PC-9 (cell line): ENCODE measurements at regions of chr16 and their contacts with region 1.

Region 1: DNA sequence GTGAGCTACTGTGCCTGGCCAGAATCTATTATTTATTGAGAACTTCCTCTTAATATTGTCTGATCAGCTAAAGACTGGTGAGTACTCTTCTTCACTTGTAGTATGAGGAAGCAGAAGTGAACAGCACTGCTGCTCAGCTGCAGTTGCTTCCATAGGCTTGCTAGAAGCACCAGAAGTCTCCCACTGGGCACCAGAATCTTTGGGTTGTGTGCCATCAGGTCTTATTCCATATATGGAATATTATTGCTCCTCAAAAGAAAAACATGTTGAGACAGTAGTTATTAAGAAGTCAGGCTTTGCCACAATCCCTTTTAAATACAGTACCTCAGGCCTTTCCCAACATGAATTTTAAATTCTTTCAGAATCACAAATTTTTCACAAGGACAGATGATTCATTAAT is 17.2 kb downstream of the SNTB2 start:
- DNase-seq: no peak
- H3K4me3 ChIP-seq: no peak overlapping the region
- H3K27ac ChIP-seq: no peak overlapping the region
- H3K4me1 ChIP-seq: peaks cover 38% of the 10 kb centered on the region
- H3K27me3 ChIP-seq: no peaks in the 10 kb centered on the region
- CTCF ChIP-seq: no peak

Region 2: GRCh38 chr16:68200088-68200783 is 1003.9 kb before region 1 on chr16:
- CTCF ChIA-PET with region 1: no interaction called
- POLR2A ChIA-PET with region 1: interaction called, 10 read pairs
- intact Hi-C with region 1: no loop called
- DNase-seq: peak in 1 of 2 experiments; percentile 68
- H3K4me3 ChIP-seq: no peak overlapping the region
- H3K27ac ChIP-seq: peak overlapping the region; percentile 47; the same call in 1 of the 2 replicates
- H3K4me1 ChIP-seq: peaks cover 17% of the 10 kb centered on the region
- H3K27me3 ChIP-seq: no peaks in the 10 kb centered on the region
- CTCF ChIP-seq: no peak

Region 3: GRCh38 chr16:69083329-69083941 is 120.7 kb before region 1 on chr16:
- CTCF ChIA-PET with region 1: interaction called, 18 read pairs
- POLR2A ChIA-PET with region 1: no interaction called
- intact Hi-C with region 1: no loop called
- DNase-seq: no peak
- H3K4me3 ChIP-seq: no peak overlapping the region
- H3K27ac ChIP-seq: no peak overlapping the region
- H3K4me1 ChIP-seq: peaks cover 5% of the 10 kb centered on the region; the same call in 1 of the 2 replicates
- H3K27me3 ChIP-seq: no peaks in the 10 kb centered on the region
- CTCF ChIP-seq: peak; percentile 27; the same call in 1 of the 2 replicates

Region 4: DNA sequence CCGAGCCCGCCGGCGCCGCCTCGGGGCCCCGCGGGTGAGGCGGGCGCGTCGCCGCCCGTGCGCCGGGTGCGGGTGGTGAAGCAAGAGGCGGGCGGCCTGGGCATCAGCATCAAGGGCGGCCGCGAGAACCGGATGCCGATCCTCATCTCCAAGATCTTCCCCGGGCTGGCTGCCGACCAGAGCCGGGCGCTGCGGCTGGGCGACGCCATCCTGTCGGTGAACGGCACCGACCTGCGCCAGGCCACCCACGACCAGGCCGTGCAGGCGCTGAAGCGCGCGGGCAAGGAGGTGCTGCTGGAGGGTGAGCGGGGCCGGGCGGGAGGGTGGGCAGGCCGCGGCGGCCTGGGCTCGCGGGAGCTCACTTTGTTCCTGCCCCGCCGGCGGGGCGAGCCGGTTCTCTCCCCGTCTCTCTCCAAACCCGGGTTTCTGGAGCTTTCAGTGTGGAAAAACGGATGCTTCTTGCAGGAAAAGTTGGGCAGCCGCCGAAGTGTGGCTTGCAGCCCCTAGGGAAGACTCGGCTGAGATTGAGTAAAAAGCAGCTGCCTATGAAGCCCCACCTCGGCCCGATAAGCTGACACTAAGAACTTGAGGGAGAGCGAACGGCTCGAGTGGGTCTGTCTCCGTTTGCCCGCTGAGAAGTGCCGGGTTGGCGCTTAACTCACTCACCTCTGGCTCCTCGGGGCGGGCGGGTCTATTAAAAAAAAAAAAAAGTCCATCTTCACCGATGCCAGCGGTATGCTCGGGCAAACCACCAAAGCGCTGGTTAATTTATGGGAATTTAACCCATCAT is 16.5 kb before region 1 on chr16:
- CTCF ChIA-PET with region 1: no interaction called
- POLR2A ChIA-PET with region 1: no interaction called
- intact Hi-C with region 1: loop called (anchors 1 kb)
- DNase-seq: peak; percentile 34 to 37
- H3K4me3 ChIP-seq: peak overlapping the region; percentile 68
- H3K27ac ChIP-seq: no peak overlapping the region
- H3K4me1 ChIP-seq: peaks cover 46% of the 10 kb centered on the region
- H3K27me3 ChIP-seq: no peaks in the 10 kb centered on the region
- CTCF ChIP-seq: no peak

Region 5: GRCh38 chr16:69217433-69217832 is 13.3 kb after region 1 on chr16:
- CTCF ChIA-PET with region 1: no interaction called
- POLR2A ChIA-PET with region 1: interaction called, 11 read pairs
- intact Hi-C with region 1: no loop called
- DNase-seq: peak in 1 of 2 experiments; percentile 85
- H3K4me3 ChIP-seq: no peak overlapping the region
- H3K27ac ChIP-seq: peak overlapping the region; percentile 40
- H3K4me1 ChIP-seq: peaks cover 46% of the 10 kb centered on the region
- H3K27me3 ChIP-seq: no peaks in the 10 kb centered on the region
- CTCF ChIP-seq: no peak

Region 6: GRCh38 chr16:69709456-69710084 is 505.4 kb after region 1 on chr16:
- CTCF ChIA-PET with region 1: no interaction called
- POLR2A ChIA-PET with region 1: interaction called, 13 read pairs
- intact Hi-C with region 1: no loop called
- DNase-seq: peak in 1 of 2 experiments; percentile 51
- H3K4me3 ChIP-seq: no peak overlapping the region
- H3K27ac ChIP-seq: no peak overlapping the region
- H3K4me1 ChIP-seq: peaks cover 18% of the 10 kb centered on the region
- H3K27me3 ChIP-seq: no peaks in the 10 kb centered on the region
- CTCF ChIP-seq: peak; percentile 81